ENCODE measurements at regions of chr2 and their contacts with region 1.

Region 1: DNA sequence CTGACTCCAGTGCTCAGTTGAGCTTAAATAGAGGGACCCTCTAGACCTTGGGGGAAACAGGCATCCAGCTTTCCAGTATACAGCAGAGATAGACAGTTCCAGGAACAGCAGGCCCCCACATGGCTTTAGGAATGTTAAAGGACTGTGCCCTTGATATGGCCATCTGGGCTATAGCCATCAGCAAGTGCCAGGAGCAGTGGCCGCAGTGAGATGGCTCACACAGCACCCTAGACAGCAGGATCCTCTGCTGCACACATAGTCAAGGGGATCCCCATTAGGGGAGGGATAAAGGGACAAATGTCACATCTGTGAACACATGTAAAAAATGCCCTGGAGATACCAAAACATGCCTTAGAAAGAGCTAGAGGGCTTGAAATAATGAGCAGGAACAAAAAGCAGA is 213.4 kb downstream of the PTH2R start:
- DNase-seq: no peak

Region 2: DNA sequence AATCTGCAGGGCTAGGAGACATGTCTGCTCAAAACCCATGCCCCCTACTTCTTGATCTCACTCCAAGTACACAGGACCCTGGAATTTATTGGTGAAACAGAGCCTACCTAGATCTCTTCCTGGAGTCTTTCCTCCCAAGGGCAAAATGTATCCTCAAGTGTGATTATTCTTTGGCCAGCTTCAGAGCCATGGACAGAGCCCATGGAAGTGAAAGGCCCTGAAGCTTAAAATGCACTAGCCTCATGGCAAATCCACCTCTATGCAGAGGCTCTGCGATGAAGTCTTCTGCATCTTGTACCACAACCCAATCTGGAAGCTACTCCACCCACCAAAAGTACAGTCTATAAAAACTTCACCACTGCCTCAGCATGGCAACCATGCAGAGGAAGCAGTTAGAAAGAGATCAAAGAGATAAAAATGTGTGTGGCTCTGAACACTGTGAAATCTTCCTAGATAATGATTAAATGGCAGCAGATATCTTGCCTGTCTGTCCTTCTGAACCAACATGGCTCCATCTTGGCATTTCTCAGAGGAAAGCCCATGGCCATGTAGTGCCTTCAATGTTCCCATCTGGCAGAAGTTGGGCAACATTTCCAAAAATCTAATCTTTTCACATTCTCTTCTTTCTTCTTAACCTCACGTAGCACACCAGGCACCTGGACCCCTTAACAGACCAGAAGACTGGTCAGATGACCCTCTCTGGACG is 1311.3 kb before region 1 on chr2:
- intact Hi-C with region 1: loop called in 1 of 2 experiments (anchors 10 kb)
- DNase-seq: no peak

Region 3: DNA sequence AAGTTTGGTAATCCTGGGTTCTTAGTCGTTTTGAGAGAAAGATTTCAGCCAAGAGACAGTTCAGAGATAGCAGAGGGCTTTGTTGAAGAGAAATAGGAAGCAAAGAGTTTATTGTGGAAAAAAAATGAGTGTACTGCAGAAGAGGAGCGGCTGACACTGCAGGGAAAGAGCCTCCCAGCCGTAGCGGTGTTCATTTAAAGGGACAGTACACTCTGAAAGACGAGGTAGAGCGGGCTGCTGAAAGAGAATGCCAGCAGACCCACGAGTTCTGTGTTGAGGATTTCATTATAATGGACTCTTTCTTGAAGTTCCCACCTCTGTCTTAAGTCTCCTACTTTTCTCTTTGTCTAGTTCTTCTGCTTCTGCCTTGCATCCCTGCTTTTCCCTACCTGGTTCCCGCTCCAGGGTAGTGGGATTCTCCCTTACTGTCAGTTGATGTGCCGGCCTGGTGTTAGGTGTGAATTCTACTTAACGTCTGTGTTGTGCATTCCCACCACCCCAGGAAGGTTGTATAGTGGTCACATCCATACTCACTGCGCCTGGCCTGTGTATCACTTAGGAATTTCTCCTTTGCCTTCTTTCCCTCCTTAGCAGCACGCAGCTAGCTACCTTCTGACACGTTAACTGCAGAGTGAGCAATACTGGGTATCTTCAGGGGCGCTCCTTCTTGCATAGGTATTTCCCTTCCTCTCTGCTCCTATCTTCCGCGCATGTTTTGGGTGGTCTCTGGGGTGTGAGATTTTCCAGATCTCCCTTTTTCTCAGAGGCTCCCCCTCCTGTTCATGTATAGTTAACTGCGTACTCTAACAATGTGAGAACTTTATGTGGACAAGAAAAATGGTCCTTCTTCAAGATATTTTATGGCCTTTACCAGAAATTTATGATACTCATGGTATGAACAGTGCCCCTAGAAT is 48.9 kb before region 1 on chr2:
- intact Hi-C with region 1: no loop called
- DNase-seq: no peak

Measured in posterior vena cava (tissue), 2 donors.